OCI-LY7 (cell line): ENCODE measurements at regions of chr17 and their contacts with region 1.

Region 1: GRCh38 chr17:13017659-13018459 is at the start of gene ELAC2:
- DNase-seq: peak; percentile 99
- H3K4me3 ChIP-seq: peak within 1 kb of the TSS; percentile 85
- H3K27ac ChIP-seq: peak within 1 kb of the TSS; percentile 52
- H3K4me1 ChIP-seq: peaks cover 19% of the 10 kb centered on the region
- CTCF ChIP-seq: 0 out of 2 replicates have a peak, but pooled peaks have one; percentile 37
- total RNA-seq, gene ELAC2: 127 and 130 TPM in 2 replicates

Region 2: GRCh38 chr17:12789075-12789776 is 228.6 kb before region 1 on chr17 and contains the start of gene ARHGAP44:
- CTCF ChIA-PET with region 1: no interaction called
- POLR2A ChIA-PET with region 1: no interaction called
- intact Hi-C with region 1: loop called (anchors 2 kb)
- DNase-seq: peak; percentile 72
- H3K4me3 ChIP-seq: peak within 1 kb of the TSS; percentile 93
- H3K27ac ChIP-seq: no peak within 1 kb of the TSS
- H3K4me1 ChIP-seq: peaks cover 10% of the 10 kb centered on the region
- CTCF ChIP-seq: no peak
- total RNA-seq, gene ARHGAP44: 11.1 and 13.7 TPM in 2 replicates

Region 3: DNA sequence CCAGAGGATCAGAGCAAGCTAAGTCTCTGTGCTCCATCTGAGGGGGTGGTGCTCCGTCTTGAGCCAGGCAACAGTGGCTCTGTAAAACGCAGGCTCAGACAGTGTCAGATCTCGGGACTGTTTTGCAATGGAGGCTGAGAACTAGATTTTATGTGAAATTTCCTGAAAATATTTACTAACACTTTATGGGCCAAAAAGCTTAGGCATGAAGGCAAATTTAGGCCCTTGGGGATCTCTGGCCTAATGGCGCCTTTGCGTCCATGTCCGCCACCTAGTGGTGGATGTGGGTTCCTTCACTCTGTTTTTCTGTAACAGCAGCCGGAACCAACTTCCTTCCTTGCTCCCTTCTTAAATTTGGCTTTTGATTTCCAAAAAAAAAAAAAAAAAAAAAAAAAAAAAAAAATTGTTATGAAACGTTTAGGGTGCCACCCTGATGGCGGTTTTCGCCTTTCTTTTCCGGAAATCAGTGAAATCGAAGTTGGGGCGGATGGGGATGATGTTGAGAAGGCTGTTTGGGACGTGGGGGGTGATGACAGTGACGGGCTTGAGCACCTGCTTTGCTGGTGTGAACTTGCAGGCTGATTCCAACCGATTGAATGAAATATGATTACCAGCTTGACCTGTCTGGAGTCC is 14.0 kb after region 1 on chr17:
- CTCF ChIA-PET with region 1: interaction called, 10 read pairs
- POLR2A ChIA-PET with region 1: interaction called, 21 read pairs
- intact Hi-C with region 1: no loop called
- DNase-seq: peak; percentile 74
- H3K4me3 ChIP-seq: no peak overlapping the region
- H3K27ac ChIP-seq: no peak overlapping the region
- H3K4me1 ChIP-seq: no peaks in the 10 kb centered on the region
- CTCF ChIP-seq: peak; percentile 91

Region 4: DNA sequence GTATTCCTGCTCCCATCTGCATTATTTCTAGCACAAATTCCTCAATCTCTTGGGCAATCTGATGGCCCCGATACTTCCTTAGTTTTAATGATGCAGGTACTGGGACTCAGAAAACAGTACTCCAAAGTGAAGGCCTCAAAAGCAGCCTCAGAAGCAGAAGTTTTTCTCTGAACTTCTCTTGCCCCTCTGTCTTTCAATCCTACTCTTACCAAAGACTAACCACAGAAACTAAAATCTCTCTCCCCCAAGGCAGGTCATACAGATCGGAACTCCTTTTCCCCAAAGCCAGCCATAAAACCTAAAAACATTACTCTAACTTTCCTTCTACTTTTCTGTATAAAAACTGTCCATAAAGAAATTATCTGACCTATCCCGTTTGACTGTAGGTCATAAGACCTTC is 480.3 kb after region 1 on chr17:
- CTCF ChIA-PET with region 1: no interaction called
- POLR2A ChIA-PET with region 1: no interaction called
- intact Hi-C with region 1: no loop called
- DNase-seq: no peak
- H3K4me3 ChIP-seq: no peak overlapping the region
- H3K27ac ChIP-seq: no peak overlapping the region
- H3K4me1 ChIP-seq: no peaks in the 10 kb centered on the region
- CTCF ChIP-seq: no peak